Cardiac septum (tissue), 1 donor: ENCODE measurements at regions of chr3 and their contacts with region 1.

Region 1: GRCh38 chr3:37014620-37015019 is 21.3 kb downstream of the MLH1 start:
- DNase-seq: no peak

Region 2: DNA sequence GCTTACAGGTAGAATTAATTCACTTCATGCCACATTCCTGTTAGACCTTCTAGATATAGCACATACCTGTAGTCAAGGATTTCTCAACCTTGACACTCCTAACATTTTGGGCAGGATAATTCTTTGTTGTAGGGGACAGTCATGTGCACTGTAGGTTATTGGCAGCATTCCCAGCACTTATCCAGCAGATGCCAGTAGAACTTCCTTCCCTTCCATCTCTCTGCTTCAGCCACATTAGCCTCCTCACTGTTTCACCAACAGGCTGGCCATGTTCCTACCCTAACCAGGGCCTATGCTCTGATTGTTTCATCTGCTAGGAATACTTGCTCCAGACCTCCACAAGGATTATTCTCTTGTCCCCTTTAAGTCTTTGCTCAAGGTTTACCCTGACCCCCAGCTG is 702.3 kb before region 1 on chr3:
- intact Hi-C with region 1: no loop called
- DNase-seq: no peak

Region 3: DNA sequence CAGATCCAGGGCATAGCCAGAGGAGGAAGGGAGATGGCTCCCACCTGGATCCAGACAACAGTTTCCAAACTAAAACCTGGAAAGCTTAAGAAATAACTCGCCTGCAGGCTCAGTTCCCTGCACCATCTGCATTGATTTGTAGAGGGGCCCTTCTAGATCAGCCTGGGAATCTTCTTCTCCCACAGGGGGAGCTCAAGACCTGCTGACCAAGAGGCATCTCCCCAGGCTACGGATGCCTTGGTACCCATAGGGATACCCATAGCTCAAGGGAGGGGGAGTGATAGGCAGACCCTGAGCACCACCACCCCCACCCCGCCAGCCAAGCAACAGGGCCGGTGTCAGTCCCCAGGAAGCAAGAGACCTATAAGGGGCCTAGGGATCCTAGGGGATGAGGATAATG is 222.3 kb before region 1 on chr3:
- intact Hi-C with region 1: no loop called
- DNase-seq: no peak

Region 4: GRCh38 chr3:37028329-37028728 is 13.7 kb after region 1 on chr3:
- intact Hi-C with region 1: loop called (anchors 1 kb)
- DNase-seq: no peak